Naive thymus-derived CD8-positive, alpha-beta T cell (primary cell): ENCODE measurements at regions of chr7 and their contacts with region 1.

Region 1: GRCh38 chr7:50206453-50207250 is 97.9 kb upstream of the IKZF1 start:
- DNase-seq: peak; percentile 34 to 91 (median 71)
- ATAC-seq: peak; percentile 74 to 83
- H3K4me3 Mint-ChIP-seq: peak overlapping the region; percentile 72 to 88 (median 84)
- H3K27ac Mint-ChIP-seq: peak overlapping the region; percentile 93 to 100 (median 96)
- H3K4me1 Mint-ChIP-seq: peaks cover 53 to 81% (median 76%) of the 10 kb centered on the region in 4 donors
- H3K27me3 Mint-ChIP-seq: no peaks in the 10 kb centered on the region

Region 2: GRCh38 chr7:50164559-50165170 is 42.0 kb before region 1 on chr7:
- POLR2A ChIA-PET with region 1: interaction called, 11 read pairs
- DNase-seq: peak in 4 of 10 donors; percentile 9 to 35 (median 30)
- ATAC-seq: peak; percentile 45 to 69
- H3K4me3 Mint-ChIP-seq: peak overlapping the region; percentile 26 to 79 (median 67)
- H3K27ac Mint-ChIP-seq: peak overlapping the region; percentile 40 to 93 (median 78)
- H3K4me1 Mint-ChIP-seq: peaks cover 21 to 69% (median 51%) of the 10 kb centered on the region in 4 donors
- H3K27me3 Mint-ChIP-seq: no peaks in the 10 kb centered on the region

Region 3: DNA sequence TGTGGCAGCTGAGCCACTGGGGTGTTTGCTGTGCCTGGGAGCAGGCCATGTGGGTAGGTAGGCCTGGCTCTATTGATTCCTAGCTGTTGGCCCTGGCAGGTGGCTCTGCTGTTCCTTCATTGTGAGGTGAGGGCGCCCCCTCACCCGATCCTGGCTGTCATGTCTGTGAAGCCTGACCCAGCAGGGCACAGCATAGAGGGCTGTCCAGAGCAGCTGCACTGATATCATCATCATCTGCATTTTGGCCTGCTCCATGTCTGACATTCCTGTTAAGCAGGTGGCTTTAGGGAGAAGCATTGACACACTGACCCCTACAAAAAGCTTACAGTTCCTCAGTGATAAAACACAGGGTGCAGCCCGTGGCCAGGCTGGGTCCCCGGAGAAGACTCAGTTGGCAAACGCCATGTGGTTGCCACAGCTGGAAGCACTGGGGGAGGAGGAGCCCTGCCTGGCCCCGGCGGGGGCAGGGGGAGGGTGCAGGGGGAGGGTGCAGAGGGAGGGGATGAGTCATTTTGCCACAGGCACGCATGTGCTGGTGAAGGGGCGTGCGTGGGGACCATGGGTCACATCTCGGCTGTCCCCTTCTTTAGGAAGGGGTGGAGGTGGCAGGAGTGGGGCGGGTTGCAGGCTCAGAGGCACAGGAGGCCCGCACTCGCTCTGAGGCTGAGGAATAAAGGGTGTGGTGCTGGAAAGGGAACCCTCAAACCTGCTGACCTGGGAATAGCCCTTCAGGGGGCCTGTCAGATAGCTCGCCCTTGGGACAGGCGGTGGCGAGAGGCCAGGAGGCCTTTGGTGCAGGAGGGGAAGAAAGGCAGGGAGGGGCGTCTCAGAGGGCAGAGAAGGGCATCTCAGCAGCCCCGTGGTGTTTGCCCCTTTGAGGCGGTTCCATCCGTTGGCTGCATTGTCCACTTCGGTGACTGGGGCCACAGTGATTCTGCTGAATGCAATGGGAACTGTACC is 129.4 kb after region 1 on chr7:
- POLR2A ChIA-PET with region 1: interaction called, 16 read pairs
- DNase-seq: peak in 9 of 10 donors; percentile 50 to 88 (median 60)
- ATAC-seq: peak; percentile 9 to 31
- H3K4me3 Mint-ChIP-seq: no peak overlapping the region
- H3K27ac Mint-ChIP-seq: no peak overlapping the region
- H3K4me1 Mint-ChIP-seq: peaks cover 0 to 45% (median 21%) of the 10 kb centered on the region in 4 donors
- H3K27me3 Mint-ChIP-seq: no peaks in the 10 kb centered on the region

Region 4: DNA sequence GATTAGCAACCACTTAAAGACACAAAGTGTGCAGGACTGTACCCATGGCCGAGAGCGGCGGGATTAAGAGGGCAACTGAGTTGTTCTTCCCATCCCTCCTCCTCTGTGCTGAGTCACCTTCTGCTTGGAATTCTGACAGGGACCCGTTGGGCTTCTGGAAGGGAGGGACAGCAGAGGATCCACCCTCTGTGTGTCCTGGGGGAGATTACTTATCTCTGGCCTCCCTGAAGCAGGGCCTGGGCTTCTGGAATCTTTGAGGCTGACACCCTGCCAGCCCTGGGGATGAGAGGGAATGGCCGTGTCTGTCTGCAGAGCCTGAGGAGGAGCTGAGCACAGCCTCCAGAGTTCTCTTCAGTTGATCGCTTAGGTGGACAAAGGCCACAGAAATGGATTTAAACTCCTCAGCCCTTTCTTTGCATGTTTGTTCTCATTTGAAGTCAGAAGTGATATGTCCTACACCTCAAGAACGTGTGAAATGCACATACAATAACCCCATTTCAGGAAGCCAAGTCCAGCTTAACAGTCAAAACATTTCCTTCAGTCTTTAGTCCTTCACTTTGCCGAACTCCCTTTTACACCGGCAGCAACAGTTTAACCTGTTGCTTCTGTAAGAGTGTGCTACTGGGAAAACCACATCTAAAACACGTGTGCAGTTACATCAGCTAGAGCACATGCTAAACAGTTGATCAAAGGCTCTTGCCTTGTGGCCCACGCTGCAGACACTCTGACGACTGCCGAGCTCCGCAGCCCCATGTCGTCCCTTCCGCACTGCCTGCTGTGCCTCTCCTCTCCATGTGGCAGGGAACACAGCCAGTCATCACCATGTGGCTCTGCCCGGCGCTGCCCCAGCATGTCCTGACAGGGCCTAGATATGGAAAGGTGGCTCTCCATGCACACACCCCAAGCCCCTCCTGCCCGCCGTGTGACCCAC is 153.6 kb after region 1 on chr7:
- POLR2A ChIA-PET with region 1: interaction called, 72 read pairs
- DNase-seq: peak; percentile 66 to 93 (median 86)
- ATAC-seq: peak; percentile 84 to 92
- H3K4me3 Mint-ChIP-seq: peak overlapping the region; percentile 54 to 86 (median 80)
- H3K27ac Mint-ChIP-seq: peak overlapping the region in 9 of 10 donors; percentile 96 to 100 (median 100)
- H3K4me1 Mint-ChIP-seq: peaks cover 66 to 99% (median 98%) of the 10 kb centered on the region in 4 donors
- H3K27me3 Mint-ChIP-seq: no peaks in the 10 kb centered on the region

Region 5: DNA sequence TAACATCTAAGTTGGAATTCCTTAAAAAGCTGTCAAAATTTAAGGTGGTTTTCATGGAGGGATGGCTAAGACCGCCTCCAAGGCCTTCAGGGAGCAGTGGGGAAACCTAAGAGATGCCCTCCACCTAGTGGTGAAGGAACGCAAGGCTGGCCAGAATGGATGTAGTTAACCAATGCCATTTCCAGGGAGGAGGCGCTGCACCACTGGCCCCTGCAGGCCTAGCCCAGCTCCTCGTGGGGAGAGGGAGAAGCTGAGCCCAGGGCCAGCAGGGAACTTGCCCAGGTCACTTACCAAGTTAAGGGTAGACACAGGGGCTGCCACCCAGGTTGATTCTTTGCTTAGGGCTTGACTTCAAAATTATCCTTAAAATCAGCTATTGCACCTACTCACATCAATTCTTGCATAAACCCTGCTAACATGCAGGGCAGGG is 211.4 kb after region 1 on chr7:
- POLR2A ChIA-PET with region 1: interaction called, 29 read pairs
- DNase-seq: peak; percentile 28 to 82 (median 61)
- ATAC-seq: peak; percentile 87 to 90
- H3K4me3 Mint-ChIP-seq: no peak overlapping the region
- H3K27ac Mint-ChIP-seq: peak overlapping the region in 3 of 10 donors; percentile 25 to 70 (median 49)
- H3K4me1 Mint-ChIP-seq: peaks cover 5 to 47% (median 29%) of the 10 kb centered on the region in 4 donors
- H3K27me3 Mint-ChIP-seq: no peaks in the 10 kb centered on the region